ENCODE measurements at regions of chr4 and their contacts with region 1.

Region 1: GRCh38 chr4:176563591-176563990 is 229.1 kb downstream of the VEGFC start:
- DNase-seq: peak; percentile 35
- H3K4me3 Mint-ChIP-seq: no peak overlapping the region
- H3K27ac Mint-ChIP-seq: no peak overlapping the region
- H3K4me1 Mint-ChIP-seq: peaks cover 5% of the 10 kb centered on the region
- H3K27me3 Mint-ChIP-seq: no peaks in the 10 kb centered on the region
- CTCF ChIP-seq: peak; percentile 10

Region 2: GRCh38 chr4:176377780-176378179 is 185.8 kb before region 1 on chr4:
- CTCF ChIA-PET with region 1: interaction called, 5 read pairs
- POLR2A ChIA-PET with region 1: interaction called, 4 read pairs
- intact Hi-C with region 1: loop called (anchors 10 kb)
- DNase-seq: peak; percentile 40
- H3K4me3 Mint-ChIP-seq: no peak overlapping the region
- H3K27ac Mint-ChIP-seq: no peak overlapping the region
- H3K4me1 Mint-ChIP-seq: peaks cover 8% of the 10 kb centered on the region
- H3K27me3 Mint-ChIP-seq: no peaks in the 10 kb centered on the region
- CTCF ChIP-seq: peak; percentile 72